ENCODE measurements at regions of chr11 and their contacts with region 1.

Region 1: GRCh38 chr11:71114124-71114851 is 138.1 kb downstream of the SHANK2 start:
- DNase-seq: no peak
- ATAC-seq: peak in 2 of 4 donors; percentile 19 to 58
- H3K4me3 ChIP-seq: no peak overlapping the region
- H3K27ac ChIP-seq: peak overlapping the region in 1 of 4 donors; percentile 37
- H3K4me1 ChIP-seq: no peaks in the 10 kb centered on the region
- H3K27me3 ChIP-seq: no peaks in the 10 kb centered on the region
- CTCF ChIP-seq: no peak

Region 2: GRCh38 chr11:71170676-71171423 is 56.6 kb after region 1 on chr11:
- intact Hi-C with region 1: no loop called
- DNase-seq: no peak
- ATAC-seq: no peak
- H3K4me3 ChIP-seq: no peak overlapping the region
- H3K27ac ChIP-seq: no peak overlapping the region
- H3K4me1 ChIP-seq: no peaks in the 10 kb centered on the region
- H3K27me3 ChIP-seq: no peaks in the 10 kb centered on the region
- CTCF ChIP-seq: no peak

Region 3: DNA sequence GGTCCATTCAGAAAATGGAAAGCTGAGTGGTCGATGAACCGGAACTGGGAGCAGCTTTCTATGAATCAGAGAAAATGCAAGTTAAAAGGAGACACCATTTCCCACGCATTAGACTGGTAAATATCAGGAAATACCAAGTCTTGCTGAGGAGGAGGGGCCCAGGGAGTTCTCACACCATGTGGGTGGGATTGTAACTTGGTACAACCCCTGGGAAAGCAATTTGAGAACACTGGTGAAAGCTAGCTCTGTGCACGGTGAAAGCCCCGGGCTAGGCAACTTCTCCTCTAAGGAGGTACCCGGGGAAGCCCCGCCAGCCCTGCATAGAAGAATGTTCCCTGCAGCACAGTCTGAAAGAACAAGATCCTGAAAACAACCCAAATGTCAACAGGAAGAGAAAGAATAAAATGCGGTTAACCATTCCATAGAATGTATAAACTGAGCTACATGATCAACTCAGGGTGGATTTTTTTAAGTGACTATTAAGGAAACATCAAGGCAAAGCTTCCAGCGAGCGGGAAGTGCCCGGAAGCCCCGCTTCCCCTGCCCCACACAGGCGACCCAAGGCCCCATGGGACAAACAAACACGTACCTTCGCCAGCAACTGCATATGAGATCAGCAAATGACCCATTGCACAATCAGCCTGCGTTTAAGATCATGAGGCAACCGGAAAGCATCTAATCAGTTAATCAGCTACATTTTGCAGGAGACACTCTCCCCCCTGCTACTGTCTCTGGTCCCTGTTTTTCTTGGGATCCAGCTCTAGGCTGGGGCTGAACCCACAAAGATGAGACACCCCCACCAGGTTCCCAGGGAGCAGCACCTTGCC is 126.8 kb after region 1 on chr11:
- intact Hi-C with region 1: loop called in 1 of 3 experiments (anchors 10 kb)
- DNase-seq: peak in 3 of 6 donors; percentile 39 to 53 (median 40)
- ATAC-seq: peak; percentile 61 to 79 (median 74)
- H3K4me3 ChIP-seq: no peak overlapping the region
- H3K27ac ChIP-seq: peak overlapping the region in 3 of 4 donors; percentile 2 to 77 (median 60)
- H3K4me1 ChIP-seq: no peaks in the 10 kb centered on the region
- H3K27me3 ChIP-seq: no peaks in the 10 kb centered on the region
- CTCF ChIP-seq: no peak

Region 4: DNA sequence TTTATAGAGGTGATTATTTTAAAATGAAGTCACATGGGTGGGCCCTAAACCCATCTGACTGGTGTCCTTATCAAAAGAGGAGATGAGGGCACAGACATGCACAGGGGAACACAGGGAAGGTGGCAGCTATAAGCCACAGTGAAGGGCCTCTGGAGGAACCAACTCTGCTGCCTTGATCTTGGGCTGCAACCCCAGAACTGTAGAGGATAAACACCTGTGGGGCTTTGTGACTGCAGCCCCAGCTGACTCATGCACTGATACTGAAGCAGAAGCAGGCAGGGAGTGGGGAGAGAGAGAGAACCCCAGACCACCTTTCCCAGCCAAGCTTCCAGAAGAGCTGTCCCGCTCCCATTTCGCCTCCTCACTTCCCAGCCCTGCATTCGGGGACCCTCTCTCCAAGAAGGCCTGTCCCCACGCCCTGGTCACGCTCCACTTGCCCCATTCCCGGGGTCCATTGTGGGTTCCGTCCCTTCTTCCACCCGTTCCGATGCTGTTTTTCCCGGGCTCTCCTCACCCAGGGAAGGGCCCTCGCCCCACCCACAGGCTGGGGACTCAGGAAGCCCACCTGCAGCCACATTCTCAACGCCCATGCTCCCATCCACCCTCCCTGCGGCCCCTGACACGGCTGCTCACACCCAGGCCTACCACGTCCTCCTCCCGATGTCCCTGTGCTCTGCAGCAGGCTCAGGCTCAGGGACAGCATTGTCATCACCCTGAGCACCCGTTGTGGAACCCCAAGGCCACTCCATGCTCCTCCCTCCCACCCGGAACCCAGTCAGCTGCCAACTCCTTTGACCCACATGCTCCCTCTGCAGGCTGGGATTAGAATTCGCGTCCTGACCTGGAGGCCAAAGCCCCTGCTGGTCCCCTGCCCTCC is 228.9 kb after region 1 on chr11:
- intact Hi-C with region 1: loop called in 2 of 3 experiments (anchors 5 to 10 kb)
- DNase-seq: peak; percentile 62 to 84 (median 76)
- ATAC-seq: peak; percentile 85 to 98 (median 92)
- H3K4me3 ChIP-seq: no peak overlapping the region
- H3K27ac ChIP-seq: no peak overlapping the region
- H3K4me1 ChIP-seq: no peaks in the 10 kb centered on the region
- H3K27me3 ChIP-seq: no peaks in the 10 kb centered on the region
- CTCF ChIP-seq: peak; percentile 54 to 63 (median 54)

Region 5: DNA sequence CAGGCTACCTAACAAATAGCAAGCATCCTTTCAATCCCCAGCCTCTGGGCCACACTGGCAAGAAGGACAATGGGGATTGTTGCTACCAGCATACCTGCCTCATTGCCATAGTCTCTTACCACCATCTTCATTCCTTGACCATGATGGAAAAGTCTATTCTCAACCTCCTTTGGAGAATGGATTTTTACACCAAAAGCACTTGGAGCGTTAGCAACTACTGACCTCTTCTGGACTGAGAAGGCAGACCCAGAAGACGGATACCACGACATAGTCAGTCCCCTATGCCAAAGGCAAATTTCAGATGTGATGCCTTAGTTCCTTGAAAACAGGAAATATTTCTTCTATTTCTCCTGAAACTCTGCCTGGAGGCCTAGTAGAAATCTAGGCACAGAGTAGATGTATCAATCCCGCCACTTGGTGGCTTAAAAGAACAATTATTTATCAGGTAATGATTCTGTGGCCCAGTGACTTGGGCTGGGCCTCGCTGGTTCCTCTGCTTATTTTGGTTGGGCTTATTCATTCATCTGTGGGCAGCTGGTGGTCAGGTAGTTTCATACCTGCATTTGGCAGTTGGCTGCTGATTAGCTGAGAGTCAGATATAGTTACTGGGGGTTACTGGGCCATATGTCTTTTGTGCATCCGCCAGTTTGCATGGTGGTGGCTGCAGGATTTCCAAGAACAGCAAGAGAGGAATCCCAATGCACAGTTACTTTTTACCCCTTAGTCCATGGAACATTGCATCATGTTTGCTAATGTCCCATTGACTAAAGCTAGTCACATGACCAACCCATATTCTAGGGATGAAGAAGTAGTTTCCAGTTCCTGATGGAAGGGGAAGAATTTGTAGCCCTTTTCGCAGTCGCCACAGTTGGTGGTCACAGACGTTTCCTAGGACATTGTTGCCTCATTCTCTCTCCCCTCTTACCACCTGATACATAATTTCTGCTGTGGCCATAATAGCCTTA is 258.7 kb after region 1 on chr11:
- intact Hi-C with region 1: no loop called
- DNase-seq: no peak
- ATAC-seq: peak in 3 of 4 donors; percentile 45 to 56 (median 52)
- H3K4me3 ChIP-seq: no peak overlapping the region
- H3K27ac ChIP-seq: no peak overlapping the region
- H3K4me1 ChIP-seq: no peaks in the 10 kb centered on the region
- H3K27me3 ChIP-seq: no peaks in the 10 kb centered on the region
- CTCF ChIP-seq: peak in 1 of 4 donors; percentile 22

Region 6: DNA sequence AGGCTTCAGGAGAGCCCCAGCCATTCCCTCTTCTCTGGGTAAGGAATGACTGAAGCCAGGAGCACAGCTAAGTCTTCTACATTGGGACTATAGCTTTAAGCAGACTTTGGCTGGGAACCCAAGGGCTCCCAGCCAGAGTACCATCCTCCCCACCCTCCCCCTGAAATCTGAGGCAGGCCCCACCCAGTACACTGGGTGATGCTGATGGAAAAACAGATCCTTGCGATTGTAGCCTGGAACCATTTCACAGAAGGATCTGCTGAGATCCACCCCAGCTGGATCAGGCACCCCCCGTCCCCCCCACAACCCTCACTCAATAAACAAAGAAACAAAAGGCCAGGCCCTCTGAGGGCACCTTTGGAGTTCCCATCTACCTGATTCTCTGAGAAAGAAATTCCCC is 924.2 kb after region 1 on chr11:
- intact Hi-C with region 1: no loop called
- DNase-seq: peak in 1 of 6 donors; percentile 27
- ATAC-seq: no peak
- H3K4me3 ChIP-seq: peak overlapping the region in 3 of 4 donors; percentile 28 to 55 (median 53)
- H3K27ac ChIP-seq: peak overlapping the region; percentile 39 to 98 (median 76)
- H3K4me1 ChIP-seq: peaks cover 34 to 39% (median 37%) of the 10 kb centered on the region in 3 donors
- H3K27me3 ChIP-seq: no peaks in the 10 kb centered on the region
- CTCF ChIP-seq: no peak